HCT116 (cell line): ENCODE measurements at regions of chr6 and their contacts with region 1.

Region 1: GRCh38 chr6:158704181-158704822 is 54.4 kb downstream of the SYTL3 start:
- DNase-seq: peak; percentile 82
- ATAC-seq: peak; percentile 84
- H3K4me3 ChIP-seq: peak overlapping the region; percentile 32 to 49
- H3K27ac ChIP-seq: peak overlapping the region; percentile 92
- H3K4me1 ChIP-seq: peaks cover 52 to 77% of the 10 kb centered on the region in 2 experiments
- H3K27me3 ChIP-seq: no peaks in the 10 kb centered on the region
- CTCF ChIP-seq: peak in 2 of 3 experiments; percentile 100; a peak in 4 of 6 replicates
- POLR2A ChIP-seq: no peak
- RAD21 ChIP-seq: no peak

Region 2: DNA sequence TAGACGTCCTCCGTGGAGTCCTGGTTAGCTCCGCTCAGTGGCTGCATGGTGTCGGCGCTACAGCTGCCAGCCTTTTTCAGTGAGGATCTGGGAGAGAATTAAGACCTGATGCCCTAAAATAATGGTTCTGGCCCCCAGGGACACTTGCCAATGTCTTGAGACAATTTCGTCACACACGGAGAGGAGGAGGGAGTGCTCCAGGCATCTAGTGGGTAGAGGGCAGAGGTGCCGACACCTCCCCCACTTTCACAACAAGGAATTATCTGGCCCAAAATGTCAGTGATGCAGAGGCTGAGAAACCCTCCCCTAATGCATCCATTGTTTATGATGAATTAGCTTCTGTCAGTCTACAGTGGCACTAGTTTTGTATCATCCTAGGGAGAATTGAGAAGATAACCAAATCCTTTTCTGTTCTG is 120.1 kb before region 1 on chr6:
- CTCF ChIA-PET with region 1: no interaction called
- POLR2A ChIA-PET with region 1: no interaction called
- RAD21 ChIA-PET with region 1: no interaction called
- intact Hi-C with region 1: no loop called
- DNase-seq: no peak
- ATAC-seq: no peak
- H3K4me3 ChIP-seq: no peak overlapping the region
- H3K27ac ChIP-seq: no peak overlapping the region
- H3K4me1 ChIP-seq: no peaks in the 10 kb centered on the region
- H3K27me3 ChIP-seq: no peaks in the 10 kb centered on the region
- CTCF ChIP-seq: no peak
- POLR2A ChIP-seq: no peak
- RAD21 ChIP-seq: no peak

Region 3: DNA sequence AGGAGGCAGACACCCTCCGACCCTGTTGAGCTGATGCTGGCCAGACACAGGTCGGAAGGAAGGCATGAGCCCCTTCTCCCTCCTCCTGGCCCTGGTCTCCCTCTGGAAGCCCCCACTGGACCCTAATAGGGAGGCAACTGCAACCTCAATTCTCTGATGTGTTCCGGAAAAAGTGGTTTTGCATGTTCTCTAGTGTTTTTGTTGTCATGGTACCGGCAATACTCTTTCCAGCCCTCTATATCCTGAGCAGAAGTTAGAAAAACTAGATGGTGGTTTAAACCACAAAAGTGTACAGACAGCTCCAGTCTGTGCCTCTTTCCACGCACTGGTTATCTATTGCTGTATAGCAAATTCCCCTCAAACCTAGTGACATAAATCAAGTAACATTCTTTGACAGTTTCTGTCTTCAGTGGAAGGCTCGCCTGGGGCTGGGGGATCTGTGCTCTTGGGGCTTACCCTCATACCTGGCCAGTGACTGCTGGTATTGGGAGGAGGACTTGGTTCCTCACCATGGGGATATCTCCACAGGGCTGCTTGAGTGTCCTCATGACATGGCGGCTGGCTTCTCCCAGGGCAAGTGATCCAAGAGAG is 17.4 kb before region 1 on chr6:
- CTCF ChIA-PET with region 1: interaction called, 23 read pairs
- POLR2A ChIA-PET with region 1: interaction called, 8 read pairs
- RAD21 ChIA-PET with region 1: interaction called in 1 of 2 experiments, 3 read pairs
- intact Hi-C with region 1: no loop called
- DNase-seq: no peak
- ATAC-seq: peak; percentile 50
- H3K4me3 ChIP-seq: no peak overlapping the region
- H3K27ac ChIP-seq: peak overlapping the region; percentile 67
- H3K4me1 ChIP-seq: peaks cover 16 to 24% of the 10 kb centered on the region in 2 experiments
- H3K27me3 ChIP-seq: no peaks in the 10 kb centered on the region
- CTCF ChIP-seq: no peak
- POLR2A ChIP-seq: no peak
- RAD21 ChIP-seq: no peak

Region 4: GRCh38 chr6:158729914-158730907 is 25.9 kb after region 1 on chr6:
- CTCF ChIA-PET with region 1: interaction called, 5 read pairs
- POLR2A ChIA-PET with region 1: interaction called, 35 read pairs
- RAD21 ChIA-PET with region 1: interaction called in 1 of 2 experiments, 3 read pairs
- intact Hi-C with region 1: loop called (anchors 1 kb)
- DNase-seq: peak; percentile 100
- ATAC-seq: peak; percentile 85
- H3K4me3 ChIP-seq: peak overlapping the region; percentile 7 to 12; a peak in 2 of 4 replicates
- H3K27ac ChIP-seq: peak overlapping the region; percentile 97
- H3K4me1 ChIP-seq: peaks cover 44 to 79% of the 10 kb centered on the region in 2 experiments
- H3K27me3 ChIP-seq: no peaks in the 10 kb centered on the region
- CTCF ChIP-seq: no peak
- POLR2A ChIP-seq: peak; percentile 37
- RAD21 ChIP-seq: no peak

Region 5: DNA sequence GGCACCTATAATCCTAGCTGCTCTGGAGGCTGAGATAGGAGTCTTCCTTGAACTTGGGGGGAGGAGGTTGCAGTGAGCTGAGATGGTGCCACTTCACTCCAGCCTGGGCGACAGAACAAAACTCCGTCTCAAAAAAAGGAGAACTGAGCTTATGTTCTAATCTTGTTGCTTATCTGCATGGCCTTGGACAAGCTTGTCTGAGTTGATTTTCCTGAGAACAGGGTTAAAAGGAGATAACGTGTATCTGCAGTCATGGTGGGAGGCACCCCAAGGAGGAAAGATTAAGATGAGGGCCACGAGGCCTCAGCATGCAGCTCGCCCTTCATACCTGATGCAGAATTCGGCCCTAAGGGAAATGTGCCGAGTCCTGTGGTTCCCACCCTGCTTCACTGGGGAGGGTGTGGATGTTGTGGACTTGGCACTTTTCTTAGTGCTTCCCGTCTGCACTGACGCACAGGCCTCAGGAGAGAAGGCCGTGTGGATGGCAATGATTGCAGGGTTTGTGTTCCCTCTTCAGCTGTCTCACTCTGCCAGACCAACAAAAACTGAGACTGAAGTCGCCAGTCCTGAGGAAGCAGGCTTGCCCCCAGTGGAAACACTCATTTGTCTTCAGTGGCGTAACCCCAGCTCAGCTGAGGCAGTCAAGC is 58.6 kb after region 1 on chr6:
- CTCF ChIA-PET with region 1: interaction called, 10 read pairs
- POLR2A ChIA-PET with region 1: interaction called, 5 read pairs
- RAD21 ChIA-PET with region 1: interaction called, 3 read pairs
- intact Hi-C with region 1: loop called (anchors 2 kb)
- DNase-seq: no peak
- ATAC-seq: peak; percentile 8
- H3K4me3 ChIP-seq: no peak overlapping the region
- H3K27ac ChIP-seq: peak overlapping the region; percentile 57
- H3K4me1 ChIP-seq: peaks cover 38 to 100% of the 10 kb centered on the region in 2 experiments; a peak in 3 of 4 replicates
- H3K27me3 ChIP-seq: no peaks in the 10 kb centered on the region
- CTCF ChIP-seq: no peak
- POLR2A ChIP-seq: no peak
- RAD21 ChIP-seq: no peak

Region 6: DNA sequence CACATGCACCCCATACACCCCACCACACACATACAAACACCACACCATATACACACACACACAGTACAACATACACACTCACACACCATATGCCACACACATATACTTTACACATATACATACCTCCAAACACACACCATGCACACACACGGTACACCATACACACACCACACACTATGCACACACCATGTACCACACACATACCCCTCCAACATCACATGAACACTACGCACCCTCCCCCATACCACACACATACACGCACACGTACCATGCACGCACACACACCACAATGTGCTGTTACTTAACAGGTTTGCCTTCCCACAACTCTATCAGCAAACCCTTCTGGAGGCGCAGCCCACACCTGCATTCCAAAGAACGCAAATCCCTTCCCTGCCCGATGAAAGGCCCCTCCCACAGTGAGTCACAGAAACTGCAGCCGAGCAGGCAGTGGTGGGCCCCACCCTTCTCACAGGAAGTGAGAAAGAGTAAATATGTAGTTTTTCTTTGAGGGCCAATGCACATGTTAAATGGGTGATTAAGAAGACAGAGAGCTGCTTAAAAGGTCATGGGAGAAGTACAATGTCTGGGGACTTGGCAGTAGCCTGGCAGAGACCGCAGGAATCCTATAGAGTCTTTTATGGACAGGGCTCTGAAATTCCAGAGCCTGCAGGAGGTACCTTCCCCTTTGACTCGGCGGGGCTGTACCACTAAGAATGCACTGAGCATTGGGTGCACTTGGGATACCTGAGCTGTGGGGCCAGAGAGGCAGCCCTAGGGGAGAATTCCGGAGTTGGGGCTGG is 149.0 kb after region 1 on chr6:
- CTCF ChIA-PET with region 1: no interaction called
- POLR2A ChIA-PET with region 1: interaction called, 3 read pairs
- RAD21 ChIA-PET with region 1: no interaction called
- intact Hi-C with region 1: loop called (anchors 1 kb)
- DNase-seq: peak; percentile 97
- ATAC-seq: peak; percentile 78
- H3K4me3 ChIP-seq: peak overlapping the region; percentile 42 to 56
- H3K27ac ChIP-seq: peak overlapping the region; percentile 85
- H3K4me1 ChIP-seq: peaks cover 80 to 100% of the 10 kb centered on the region in 2 experiments
- H3K27me3 ChIP-seq: no peaks in the 10 kb centered on the region
- CTCF ChIP-seq: no peak
- POLR2A ChIP-seq: no peak
- RAD21 ChIP-seq: no peak

Region 7: DNA sequence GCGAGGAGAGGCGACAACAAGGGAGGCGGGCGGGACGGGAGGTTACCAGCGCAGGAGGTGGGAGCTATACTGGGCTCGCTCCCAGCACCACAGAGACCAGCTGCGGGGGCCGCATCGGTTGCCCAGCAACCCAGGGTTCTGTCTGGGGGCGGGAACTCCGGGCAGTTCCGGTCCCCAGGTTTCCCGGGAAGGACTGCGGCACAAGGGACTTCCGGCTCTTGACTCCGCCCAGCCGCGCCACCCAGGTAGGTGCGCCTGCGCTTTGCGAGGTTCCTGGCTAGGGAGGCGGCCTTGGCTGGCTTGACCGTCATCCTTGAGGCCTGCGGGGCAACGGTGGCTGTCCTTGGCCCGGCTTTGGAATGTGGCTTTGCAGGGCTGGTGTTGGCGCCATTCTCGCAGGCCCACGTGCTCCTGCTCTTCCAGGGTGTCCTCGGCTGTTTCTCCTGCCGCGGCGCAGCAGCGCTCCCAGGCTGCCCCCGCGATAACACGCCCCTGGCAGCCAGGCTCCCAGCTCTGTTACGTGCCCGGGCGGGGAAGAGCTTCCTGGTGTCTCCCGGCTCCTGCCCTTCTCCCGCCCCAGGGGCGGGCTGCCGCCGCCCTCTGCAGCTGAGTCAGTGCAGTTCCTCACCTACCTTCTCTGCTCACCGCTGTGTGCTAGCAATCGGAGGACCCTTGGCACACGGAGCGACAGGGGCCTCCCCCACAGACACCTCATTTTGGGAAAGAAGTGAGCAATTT is 295.5 kb after region 1 on chr6 and contains the start of gene RSPH3:
- CTCF ChIA-PET with region 1: interaction called, 4 read pairs
- POLR2A ChIA-PET with region 1: interaction called, 3 read pairs
- RAD21 ChIA-PET with region 1: no interaction called
- intact Hi-C with region 1: loop called (anchors 10 kb)
- DNase-seq: peak; percentile 96
- ATAC-seq: peak; percentile 80
- H3K4me3 ChIP-seq: peak within 1 kb of the TSS; percentile 88 to 92
- H3K27ac ChIP-seq: peak within 1 kb of the TSS; percentile 85
- H3K4me1 ChIP-seq: peaks cover 37 to 69% of the 10 kb centered on the region in 2 experiments
- H3K27me3 ChIP-seq: no peaks in the 10 kb centered on the region
- CTCF ChIP-seq: 0 out of 6 replicates have a peak, but pooled peaks of 1 of the 3 experiments have one; percentile 7
- POLR2A ChIP-seq: peak; percentile 94
- RAD21 ChIP-seq: no peak
- total RNA-seq, gene RSPH3: 24.7 TPM

Region 8: DNA sequence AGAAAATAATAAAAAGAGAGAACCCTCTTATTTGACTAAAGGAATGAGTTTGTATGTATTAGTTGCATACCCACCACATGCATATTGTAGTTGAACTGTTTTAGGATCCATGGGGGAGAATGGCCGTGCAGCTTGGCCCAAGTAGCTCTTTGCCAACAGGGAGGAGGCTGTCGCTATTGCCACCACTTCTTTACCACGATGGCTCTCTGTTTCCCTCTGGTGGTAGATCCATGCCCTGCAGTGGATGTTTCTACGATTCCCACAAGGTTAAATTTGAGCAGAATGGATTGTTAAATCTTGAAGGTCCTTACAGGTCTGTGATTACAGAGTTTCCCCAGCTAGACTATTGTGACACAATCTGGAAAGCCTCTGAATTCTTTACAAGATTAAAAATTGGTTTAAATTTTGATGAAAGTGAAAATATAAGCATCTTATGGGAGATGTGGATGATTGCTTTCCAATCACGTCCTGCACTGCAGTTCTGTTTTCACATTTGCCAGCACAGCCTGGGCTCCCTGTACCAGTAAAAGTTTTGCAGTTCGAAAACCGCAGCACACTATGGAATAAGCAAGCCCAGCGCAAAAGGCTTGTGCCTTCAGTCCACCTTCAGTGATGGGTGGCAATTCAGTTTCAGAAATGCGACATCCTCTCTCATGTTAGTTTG is 430.5 kb after region 1 on chr6:
- CTCF ChIA-PET with region 1: interaction called, 16 read pairs
- POLR2A ChIA-PET with region 1: no interaction called
- RAD21 ChIA-PET with region 1: interaction called in 1 of 2 experiments, 3 read pairs
- intact Hi-C with region 1: loop called (anchors 2 kb)
- DNase-seq: peak; percentile 75
- ATAC-seq: peak; percentile 91
- H3K4me3 ChIP-seq: peak overlapping the region in 1 of 2 experiments; percentile 20; a peak in 2 of 4 replicates
- H3K27ac ChIP-seq: no peak overlapping the region
- H3K4me1 ChIP-seq: peaks cover 0 to 12% of the 10 kb centered on the region in 2 experiments; a peak in 2 of 4 replicates
- H3K27me3 ChIP-seq: no peaks in the 10 kb centered on the region
- CTCF ChIP-seq: peak; percentile 93 to 99 (median 99)
- POLR2A ChIP-seq: no peak
- RAD21 ChIP-seq: peak; percentile 98